Caco-2 (cell line): ENCODE measurements at regions of chr2 and their contacts with region 1.

Region 1: GRCh38 chr2:127701193-127701650 is at the start of gene SFT2D3:
- DNase-seq: peak; percentile 95 to 96
- H3K4me3 ChIP-seq: peak within 1 kb of the TSS; percentile 51
- H3K4me3 Mint-ChIP-seq: peak within 1 kb of the TSS; percentile 98
- H3K27ac Mint-ChIP-seq: peak within 1 kb of the TSS; percentile 99
- H3K4me1 ChIP-seq: peaks cover 10% of the 10 kb centered on the region
- H3K4me1 Mint-ChIP-seq: peaks cover 16% of the 10 kb centered on the region
- H3K27me3 ChIP-seq: no peaks in the 10 kb centered on the region
- H3K27me3 Mint-ChIP-seq: no peaks in the 10 kb centered on the region
- CTCF ChIP-seq: no peak
- total RNA-seq, gene SFT2D3: 12.0 and 12.2 TPM in 2 replicates

Region 2: GRCh38 chr2:127735537-127736399 is 34.5 kb after region 1 on chr2:
- CTCF ChIA-PET with region 1: no interaction called
- POLR2A ChIA-PET with region 1: no interaction called
- intact Hi-C with region 1: loop called (anchors 1 kb)
- DNase-seq: peak in 1 of 2 experiments; percentile 17
- H3K4me3 ChIP-seq: no peak overlapping the region
- H3K4me3 Mint-ChIP-seq: peak overlapping the region; percentile 26
- H3K27ac Mint-ChIP-seq: peak overlapping the region; percentile 61
- H3K4me1 ChIP-seq: peaks cover 39% of the 10 kb centered on the region
- H3K4me1 Mint-ChIP-seq: peaks cover 21% of the 10 kb centered on the region
- H3K27me3 ChIP-seq: no peaks in the 10 kb centered on the region
- H3K27me3 Mint-ChIP-seq: no peaks in the 10 kb centered on the region
- CTCF ChIP-seq: no peak

Region 3: GRCh38 chr2:127810619-127811396 is 109.6 kb after region 1 on chr2 and contains the start of gene WDR33:
- CTCF ChIA-PET with region 1: no interaction called
- POLR2A ChIA-PET with region 1: interaction called, 4 read pairs
- intact Hi-C with region 1: loop called (anchors 1 kb)
- DNase-seq: peak; percentile 95
- H3K4me3 ChIP-seq: peak within 1 kb of the TSS; percentile 81
- H3K4me3 Mint-ChIP-seq: peak within 1 kb of the TSS; percentile 91
- H3K27ac Mint-ChIP-seq: peak within 1 kb of the TSS; percentile 99
- H3K4me1 ChIP-seq: peaks cover 27% of the 10 kb centered on the region
- H3K4me1 Mint-ChIP-seq: peaks cover 13% of the 10 kb centered on the region
- H3K27me3 ChIP-seq: no peaks in the 10 kb centered on the region
- H3K27me3 Mint-ChIP-seq: no peaks in the 10 kb centered on the region
- CTCF ChIP-seq: peak in 1 of 2 experiments; percentile 0
- total RNA-seq, gene WDR33: 74.9 and 77.5 TPM in 2 replicates